GM12878 (cell line): ENCODE measurements at regions of chr9 and their contacts with region 1.

Region 1: DNA sequence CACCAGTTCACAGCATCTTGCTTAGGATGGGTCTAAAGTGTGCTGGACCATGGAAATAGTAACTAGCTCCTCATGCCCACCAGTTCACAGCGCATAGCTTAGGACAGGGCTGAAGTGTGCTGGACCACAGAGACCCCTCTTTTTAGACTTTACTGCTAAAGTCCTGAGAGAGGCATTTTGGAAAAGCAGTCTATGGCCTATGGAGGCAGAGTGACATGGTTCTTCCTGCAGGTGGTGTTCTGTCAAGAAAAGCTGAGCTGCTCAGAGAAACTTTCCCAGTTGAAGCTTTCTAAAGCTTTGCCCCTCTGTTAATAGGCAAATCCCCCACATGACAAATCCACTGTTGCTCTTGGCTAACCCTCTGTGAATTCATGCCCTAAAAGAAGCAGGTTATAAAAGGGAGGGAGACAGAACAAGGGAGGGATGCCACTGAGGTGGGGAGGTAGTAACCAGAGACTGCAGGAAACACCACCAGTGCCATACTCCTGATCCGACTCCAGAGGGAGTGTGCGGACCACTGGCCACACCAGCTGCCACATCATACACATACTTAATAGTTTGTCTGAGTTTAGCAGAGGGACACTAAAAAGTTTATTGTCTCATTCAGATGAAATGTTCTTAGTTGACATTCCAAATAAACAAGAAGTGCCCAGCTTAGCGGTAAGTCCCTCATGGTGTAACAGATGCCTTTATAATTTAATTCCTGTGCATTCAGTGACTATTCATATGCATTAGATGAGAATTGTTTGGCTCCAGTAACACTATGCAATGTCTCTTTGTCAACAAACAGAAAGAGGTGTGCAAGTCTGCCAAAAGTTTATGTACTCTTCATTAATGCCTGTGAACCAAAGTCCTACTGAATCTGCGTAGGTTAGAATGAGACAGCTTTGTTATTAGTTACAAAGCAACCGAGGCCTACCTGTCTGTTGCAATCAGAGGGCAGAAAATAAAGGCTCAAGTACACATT is 236.2 kb upstream of the NFIL3 start:
- DNase-seq: no peak
- ATAC-seq: peak; percentile 46; the same call in 1 of the 3 replicates
- H3K4me3 ChIP-seq: no peak overlapping the region
- H3K27ac ChIP-seq: no peak overlapping the region
- H3K4me1 ChIP-seq: no peaks in the 10 kb centered on the region
- H3K27me3 ChIP-seq: peaks cover 4% of the 10 kb centered on the region in 2 experiments
- CTCF ChIP-seq: peak; percentile 13 to 40 (median 18); a peak in 3 of 6 replicates
- EP300 ChIP-seq: no peak
- POLR2A ChIP-seq: no peak
- RAD21 ChIP-seq: peak; percentile 35

Region 2: DNA sequence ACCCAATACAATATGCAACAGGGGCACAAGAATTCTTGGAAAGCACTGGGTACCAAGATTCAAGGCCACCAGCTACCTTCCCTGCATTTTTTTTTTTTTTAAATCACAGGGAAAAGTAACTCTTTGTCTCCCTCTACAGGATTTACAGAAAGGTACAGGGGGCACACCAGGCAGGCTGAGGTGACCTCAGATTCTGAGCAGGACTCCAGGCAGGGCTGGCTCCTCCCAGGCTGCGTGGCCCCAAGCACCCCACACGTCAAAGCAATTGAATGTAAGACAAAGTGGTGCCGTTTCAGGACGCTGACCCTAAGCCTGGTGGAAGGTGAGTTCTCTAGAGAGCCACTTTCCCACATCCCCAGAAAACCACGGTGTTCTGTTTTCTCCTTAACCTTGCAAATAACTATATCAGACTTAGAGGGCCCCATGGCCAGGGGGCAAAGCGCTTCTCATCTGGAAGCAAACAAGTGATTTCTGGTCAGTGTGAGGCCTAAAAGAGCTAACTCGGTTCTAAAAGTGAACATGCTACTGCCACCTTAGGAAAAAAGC is 67.6 kb after region 1 on chr9:
- CTCF ChIA-PET with region 1: interaction called, 4 read pairs
- POLR2A ChIA-PET with region 1: no interaction called
- RAD21 ChIA-PET with region 1: no interaction called
- SMC1A ChIA-PET with region 1: no interaction called
- in situ Hi-C with region 1: no loop called
- intact Hi-C with region 1: loop called (anchors 5 kb)
- DNase-seq: no peak
- ATAC-seq: peak; percentile 97
- H3K4me3 ChIP-seq: no peak overlapping the region
- H3K27ac ChIP-seq: no peak overlapping the region
- H3K4me1 ChIP-seq: no peaks in the 10 kb centered on the region
- H3K27me3 ChIP-seq: no peaks in the 10 kb centered on the region; a peak in 1 of 4 replicates
- CTCF ChIP-seq: peak; percentile 63 to 77 (median 71)
- EP300 ChIP-seq: no peak
- POLR2A ChIP-seq: no peak
- RAD21 ChIP-seq: peak; percentile 83

Region 3: GRCh38 chr9:91750343-91750742 is 90.5 kb after region 1 on chr9:
- CTCF ChIA-PET with region 1: no interaction called
- POLR2A ChIA-PET with region 1: no interaction called
- RAD21 ChIA-PET with region 1: no interaction called
- SMC1A ChIA-PET with region 1: no interaction called
- in situ Hi-C with region 1: no loop called
- intact Hi-C with region 1: no loop called
- DNase-seq: no peak
- ATAC-seq: no peak
- H3K4me3 ChIP-seq: no peak overlapping the region
- H3K27ac ChIP-seq: no peak overlapping the region
- H3K4me1 ChIP-seq: no peaks in the 10 kb centered on the region
- H3K27me3 ChIP-seq: peaks cover 0 to 4% of the 10 kb centered on the region in 2 experiments; a peak in 2 of 4 replicates
- CTCF ChIP-seq: 0 out of 6 replicates have a peak, but pooled peaks of 1 of the 3 experiments have one; percentile 4
- EP300 ChIP-seq: no peak
- POLR2A ChIP-seq: no peak
- RAD21 ChIP-seq: no peak